ENCODE measurements at regions of chr11 and their contacts with region 1.

Region 1: DNA sequence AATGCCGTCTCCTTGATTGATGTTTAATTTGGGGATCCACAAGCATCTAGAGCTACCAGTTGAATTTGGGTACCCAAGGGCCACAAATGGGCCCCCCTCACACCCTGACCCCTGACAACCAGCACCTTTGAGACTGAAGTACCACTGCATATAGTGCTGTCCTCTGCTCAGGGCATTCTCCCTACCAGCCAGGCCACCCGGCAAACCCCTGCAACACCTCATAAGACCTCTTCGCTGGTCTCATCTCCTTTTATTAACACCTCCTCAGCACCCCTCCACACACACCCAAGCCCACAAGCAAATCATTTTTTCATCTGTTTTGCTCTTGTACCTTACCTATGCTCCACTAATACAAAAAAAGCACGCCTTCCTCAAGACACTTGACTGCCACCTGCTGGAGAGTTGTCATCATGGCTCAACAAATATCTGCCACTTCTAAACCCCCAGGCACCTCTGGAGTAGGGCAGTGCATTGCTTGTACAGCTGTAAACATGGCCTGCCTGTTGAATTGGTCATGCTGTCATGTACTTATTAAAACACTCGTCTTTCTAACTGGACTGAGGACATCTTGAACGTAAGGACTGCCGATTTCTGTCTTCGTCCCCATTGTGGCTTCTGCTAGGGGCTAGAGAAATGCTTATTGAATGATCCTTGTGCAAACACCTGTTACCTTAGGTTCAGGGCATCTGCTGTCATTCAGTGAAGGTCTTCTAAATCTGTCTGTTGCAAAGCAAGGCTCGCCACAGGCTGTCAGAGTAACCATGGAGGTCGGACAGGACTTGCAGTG is 66.5 kb downstream of the BMAL1 start:
- DNase-seq: no peak

Region 2: DNA sequence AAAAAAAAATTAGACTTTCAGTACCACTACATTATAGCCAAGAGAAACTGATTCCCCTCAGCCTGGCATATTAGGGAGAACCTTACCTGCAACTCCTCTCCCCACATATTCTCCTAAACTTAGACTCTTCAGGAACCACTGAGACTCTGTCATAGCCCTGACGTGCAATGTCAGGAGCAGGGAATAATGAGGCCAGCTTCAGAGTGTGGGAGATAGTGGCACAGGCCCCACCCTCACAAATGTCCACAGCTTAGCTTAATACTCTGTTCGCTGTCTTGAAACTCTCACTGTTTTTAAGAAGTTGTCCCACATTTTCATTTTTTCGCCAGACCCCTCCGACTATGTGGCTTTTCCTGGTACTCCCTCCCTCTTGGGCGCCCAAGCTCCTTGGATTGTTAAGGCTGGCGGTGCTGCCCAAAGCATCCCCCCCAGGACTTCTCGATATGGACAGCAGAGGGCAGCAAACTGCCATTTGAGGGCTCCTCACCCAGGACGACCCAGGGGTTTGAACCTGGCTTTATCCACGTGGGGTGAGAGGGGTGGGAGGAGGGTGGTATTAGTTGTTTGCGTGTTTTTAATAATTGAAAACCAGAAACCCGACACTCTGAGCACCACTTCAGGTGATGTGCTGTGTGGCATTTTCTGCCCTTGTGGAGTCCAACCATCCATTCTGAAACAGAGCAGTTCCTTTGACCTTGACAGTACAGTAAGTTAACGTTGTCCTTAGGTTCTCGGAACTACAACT is 380.2 kb before region 1 on chr11:
- intact Hi-C with region 1: loop called (anchors 5 to 10 kb)
- DNase-seq: peak; percentile 83

Region 3: GRCh38 chr11:13210424-13210823 is 133.7 kb before region 1 on chr11:
- intact Hi-C with region 1: loop called (anchors 2 to 10 kb)
- DNase-seq: peak; percentile 79

Measured in posterior vena cava (tissue), 2 donors.